ENCODE measurements at regions of chr1 and their contacts with region 1.

Region 1: DNA sequence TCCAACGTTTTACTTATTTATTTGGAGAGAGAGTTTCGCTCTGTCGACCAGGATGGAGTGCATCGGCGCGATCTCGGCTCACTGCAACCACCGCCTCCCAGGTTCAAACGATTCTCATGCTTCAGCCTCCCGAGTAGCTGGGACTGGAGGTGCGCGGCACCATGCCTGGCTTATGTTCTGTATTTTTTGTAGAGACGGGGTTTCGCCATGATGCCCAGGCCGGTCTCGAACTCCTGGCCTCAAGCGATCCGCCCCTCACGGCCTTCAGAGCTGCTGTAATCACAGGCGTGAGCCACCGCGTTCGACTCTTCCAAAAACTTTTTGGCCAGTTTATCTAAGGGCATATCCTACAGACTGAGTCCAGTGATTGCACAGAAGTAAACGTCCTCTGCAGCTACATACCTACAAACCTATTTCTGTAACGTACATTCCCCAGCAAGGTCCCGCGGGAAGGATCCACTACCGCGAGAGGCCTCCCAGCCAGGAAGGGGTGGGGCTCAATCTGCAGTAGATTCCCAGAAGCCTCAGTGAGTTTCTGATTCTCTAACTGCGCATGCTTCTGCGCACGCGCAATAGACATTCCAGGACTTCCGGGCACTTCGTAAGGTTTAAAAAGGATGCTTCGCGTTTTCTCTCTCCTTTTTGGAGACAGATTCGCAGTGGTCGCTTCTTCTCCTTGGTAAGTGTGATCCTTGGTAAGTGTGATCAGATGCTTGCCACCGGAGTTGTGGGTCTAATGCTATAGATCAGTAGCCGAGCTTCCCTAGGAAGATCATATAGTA is at the start of gene RCC1:
- DNase-seq: peak; percentile 82
- ATAC-seq: peak; percentile 87
- H3K4me3 Mint-ChIP-seq: peak within 1 kb of the TSS; percentile 98
- H3K27ac Mint-ChIP-seq: peak within 1 kb of the TSS; percentile 98
- H3K4me1 Mint-ChIP-seq: peaks cover 38% of the 10 kb centered on the region
- H3K27me3 Mint-ChIP-seq: no peaks in the 10 kb centered on the region
- CTCF ChIP-seq: no peak
- total RNA-seq, gene RCC1: 45.2 and 47.5 TPM in 2 replicates

Region 2: DNA sequence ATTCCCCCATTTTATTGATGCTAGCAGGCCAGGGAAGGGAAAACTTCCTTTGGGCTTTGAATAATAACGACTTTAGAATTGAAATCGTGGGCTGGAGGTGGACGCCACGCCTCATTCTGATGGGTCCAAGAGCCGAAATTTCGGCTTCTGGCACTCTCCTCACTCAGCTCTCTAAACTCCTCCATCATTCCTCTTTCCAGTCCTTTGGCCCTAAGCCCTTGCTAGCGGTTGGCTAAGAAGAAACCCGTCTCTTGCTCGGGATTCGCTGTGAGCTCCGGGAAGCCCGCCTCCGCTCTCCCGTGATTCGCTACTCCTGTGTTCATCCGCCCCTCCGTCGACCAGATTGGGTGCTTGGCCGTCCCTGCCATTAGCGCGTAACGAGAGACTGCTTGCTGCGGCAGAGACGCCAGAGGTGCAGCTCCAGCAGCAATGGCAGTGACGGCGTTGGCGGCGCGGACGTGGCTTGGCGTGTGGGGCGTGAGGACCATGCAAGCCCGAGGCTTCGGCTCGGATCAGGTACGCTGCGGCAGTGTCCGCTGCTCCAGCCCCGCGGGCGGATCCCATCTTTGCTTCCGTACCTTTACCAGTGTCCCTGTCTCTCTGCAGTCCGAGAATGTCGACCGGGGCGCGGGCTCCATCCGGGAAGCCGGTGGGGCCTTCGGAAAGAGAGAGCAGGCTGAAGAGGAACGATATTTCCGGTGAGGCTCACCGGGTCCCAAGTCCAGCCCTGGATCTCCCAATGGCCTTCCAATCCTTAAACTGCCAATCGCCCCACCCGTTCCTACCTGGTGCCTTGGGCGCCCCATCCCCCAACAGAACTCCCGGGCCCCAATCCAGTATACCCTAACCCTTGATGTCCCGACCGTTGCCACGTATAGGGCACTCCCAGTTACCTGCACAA is 269.6 kb before region 1 on chr1 and contains the start of gene ATP5IF1:
- CTCF ChIA-PET with region 1: no interaction called
- POLR2A ChIA-PET with region 1: interaction called, 11 read pairs
- intact Hi-C with region 1: no loop called
- DNase-seq: peak; percentile 82
- ATAC-seq: peak; percentile 95
- H3K4me3 Mint-ChIP-seq: no peak within 1 kb of the TSS
- H3K27ac Mint-ChIP-seq: no peak within 1 kb of the TSS
- H3K4me1 Mint-ChIP-seq: peaks cover 27% of the 10 kb centered on the region
- H3K27me3 Mint-ChIP-seq: no peaks in the 10 kb centered on the region
- CTCF ChIP-seq: no peak
- total RNA-seq, gene ATP5IF1: 87.0 and 104 TPM in 2 replicates

Region 3: DNA sequence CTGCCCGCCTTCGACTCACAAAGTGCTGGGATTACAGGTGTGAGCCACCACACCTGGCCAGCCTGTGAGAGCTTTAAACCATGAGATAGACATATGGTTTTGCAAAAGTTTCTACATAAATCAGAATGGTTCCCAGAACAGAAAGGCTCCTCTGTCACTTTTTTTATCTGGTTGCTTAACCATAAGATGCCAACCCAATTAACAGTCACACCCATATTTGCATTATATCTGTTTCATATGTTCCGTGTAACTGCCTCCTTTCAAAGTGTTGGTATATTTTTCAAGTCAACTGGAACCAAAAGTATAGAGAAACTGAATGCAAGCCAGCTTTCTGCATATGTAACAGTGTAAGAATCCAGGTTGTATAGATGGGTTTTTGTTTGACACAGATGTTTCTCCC is 23.5 kb before region 1 on chr1:
- CTCF ChIA-PET with region 1: no interaction called
- POLR2A ChIA-PET with region 1: interaction called, 19 read pairs
- intact Hi-C with region 1: no loop called
- DNase-seq: no peak
- ATAC-seq: no peak
- H3K4me3 Mint-ChIP-seq: no peak overlapping the region
- H3K27ac Mint-ChIP-seq: no peak overlapping the region
- H3K4me1 Mint-ChIP-seq: no peaks in the 10 kb centered on the region
- H3K27me3 Mint-ChIP-seq: no peaks in the 10 kb centered on the region
- CTCF ChIP-seq: no peak

Region 4: DNA sequence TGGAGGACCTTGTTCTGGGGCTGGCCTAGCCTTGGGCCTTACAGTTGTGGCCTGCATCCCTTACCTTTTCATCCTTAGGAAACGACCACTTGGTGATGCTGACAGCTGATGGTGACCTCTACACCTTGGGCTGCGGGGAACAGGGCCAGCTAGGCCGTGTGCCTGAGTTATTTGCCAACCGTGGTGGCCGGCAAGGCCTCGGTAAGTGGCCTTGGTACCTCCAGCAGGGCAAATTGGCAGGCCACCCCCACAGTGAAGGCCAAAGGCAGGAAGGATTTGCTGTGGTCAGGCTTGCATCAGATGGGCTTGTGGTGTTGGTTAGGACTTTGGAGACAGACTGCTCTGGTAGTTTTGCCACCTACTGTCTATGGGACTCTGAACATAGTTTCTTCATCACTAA is 29.6 kb after region 1 on chr1:
- CTCF ChIA-PET with region 1: no interaction called
- POLR2A ChIA-PET with region 1: no interaction called
- intact Hi-C with region 1: no loop called
- DNase-seq: no peak
- ATAC-seq: no peak
- H3K4me3 Mint-ChIP-seq: no peak overlapping the region
- H3K27ac Mint-ChIP-seq: no peak overlapping the region
- H3K4me1 Mint-ChIP-seq: no peaks in the 10 kb centered on the region
- H3K27me3 Mint-ChIP-seq: no peaks in the 10 kb centered on the region
- CTCF ChIP-seq: no peak

Region 5: GRCh38 chr1:28552758-28553663 is 47.4 kb after region 1 on chr1 and contains the start of gene TRNAU1AP:
- CTCF ChIA-PET with region 1: no interaction called
- POLR2A ChIA-PET with region 1: interaction called, 37 read pairs
- intact Hi-C with region 1: loop called (anchors 1 kb)
- DNase-seq: peak; percentile 94
- ATAC-seq: peak; percentile 93
- H3K4me3 Mint-ChIP-seq: peak within 1 kb of the TSS; percentile 99
- H3K27ac Mint-ChIP-seq: peak within 1 kb of the TSS; percentile 98
- H3K4me1 Mint-ChIP-seq: peaks cover 26% of the 10 kb centered on the region
- H3K27me3 Mint-ChIP-seq: no peaks in the 10 kb centered on the region
- CTCF ChIP-seq: no peak
- total RNA-seq, gene TRNAU1AP: 36.9 and 42.0 TPM in 2 replicates

Region 6: DNA sequence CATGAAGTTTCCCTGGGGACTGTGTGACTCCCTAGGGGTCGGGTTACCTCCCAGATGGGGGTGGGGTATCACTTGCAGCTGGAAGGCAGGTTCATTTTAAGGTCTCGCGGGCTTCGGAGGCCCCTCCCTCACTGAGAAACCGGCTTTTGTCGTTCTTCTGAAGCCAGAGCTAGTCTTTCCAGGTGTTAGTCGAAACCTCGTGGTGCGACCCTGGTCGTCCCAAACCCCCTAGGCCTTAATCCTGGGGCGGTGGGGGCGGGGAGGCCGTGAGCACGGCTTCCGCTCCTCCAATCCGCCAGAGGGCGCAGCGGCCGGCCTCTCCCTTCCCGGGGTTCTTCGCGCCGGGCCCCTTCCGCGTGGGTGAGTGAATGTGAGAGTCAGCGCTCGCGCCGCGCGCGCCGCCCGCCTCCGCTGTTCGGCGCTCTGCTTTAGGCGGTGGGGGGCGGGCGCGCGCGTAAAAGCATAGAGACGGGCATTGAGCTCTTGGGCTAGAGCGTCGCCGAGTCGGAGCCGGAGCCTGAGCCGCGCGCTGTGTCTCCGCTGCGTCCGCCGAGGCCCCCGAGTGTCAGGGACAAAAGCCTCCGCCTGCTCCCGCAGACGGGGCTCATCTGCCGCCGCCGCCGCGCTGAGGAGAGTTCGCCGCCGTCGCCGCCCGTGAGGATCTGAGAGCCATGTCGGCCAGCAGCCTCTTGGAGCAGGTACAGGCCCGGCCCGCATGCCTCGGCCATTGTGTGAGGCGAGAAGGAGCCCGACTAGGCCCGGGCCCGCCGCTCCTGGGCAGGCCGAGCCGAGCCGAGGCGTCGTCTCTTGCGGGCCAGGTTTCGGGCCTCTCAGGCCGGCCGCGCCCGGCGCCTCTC is 231.1 kb after region 1 on chr1 and contains the start of gene YTHDF2:
- CTCF ChIA-PET with region 1: interaction called, 3 read pairs
- POLR2A ChIA-PET with region 1: interaction called, 15 read pairs
- intact Hi-C with region 1: loop called (anchors 2 kb)
- DNase-seq: peak; percentile 96
- ATAC-seq: peak; percentile 93
- H3K4me3 Mint-ChIP-seq: peak within 1 kb of the TSS; percentile 96
- H3K27ac Mint-ChIP-seq: peak within 1 kb of the TSS; percentile 91
- H3K4me1 Mint-ChIP-seq: peaks cover 30% of the 10 kb centered on the region
- H3K27me3 Mint-ChIP-seq: no peaks in the 10 kb centered on the region
- CTCF ChIP-seq: peak; percentile 83
- total RNA-seq, gene YTHDF2: 70.6 and 81.2 TPM in 2 replicates